Tibial artery (tissue), 4 donors: ENCODE measurements at regions of chr2 and their contacts with region 1.

Region 1: GRCh38 chr2:10832203-10832936 is 19.8 kb upstream of the PDIA6 start:
- DNase-seq: peak; percentile 64 to 80
- H3K4me3 ChIP-seq: no peak overlapping the region
- H3K27ac ChIP-seq: no peak overlapping the region
- H3K4me1 ChIP-seq: peaks cover 0 to 11% (median 2%) of the 10 kb centered on the region in 4 donors
- H3K27me3 ChIP-seq: peaks cover 0 to 63% of the 10 kb centered on the region in 2 donors
- CTCF ChIP-seq: peak; percentile 78 to 96

Region 2: GRCh38 chr2:11124503-11125068 is 292.2 kb after region 1 on chr2:
- intact Hi-C with region 1: loop called (anchors 2 kb)
- DNase-seq: no peak
- H3K4me3 ChIP-seq: no peak overlapping the region
- H3K27ac ChIP-seq: no peak overlapping the region
- H3K4me1 ChIP-seq: peaks cover 0 to under 1% (median 0%) of the 10 kb centered on the region in 4 donors
- H3K27me3 ChIP-seq: peaks cover 0 to 27% of the 10 kb centered on the region in 2 donors
- CTCF ChIP-seq: no peak